Esophagus muscularis mucosa (tissue), 4 donors: ENCODE measurements at regions of chr5 and their contacts with region 1.

Region 1: DNA sequence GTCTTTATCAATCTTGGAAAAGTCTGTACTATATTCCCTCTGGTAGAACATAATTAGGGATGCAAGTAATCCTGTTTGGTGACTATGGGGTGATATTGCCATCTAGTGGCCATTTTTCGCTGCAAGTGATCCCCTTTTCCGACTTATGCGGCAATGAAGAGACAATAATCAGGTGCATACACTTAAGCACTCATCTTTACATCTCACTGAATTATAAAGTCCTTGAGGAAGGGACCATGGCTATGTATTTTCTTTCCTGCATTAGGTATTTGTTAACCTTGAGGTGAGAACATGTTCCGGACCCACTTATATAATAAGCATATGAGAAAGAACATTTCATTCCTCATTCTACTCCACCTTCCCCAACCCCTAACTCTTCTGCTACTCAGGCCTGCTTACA is 19.6 kb upstream of the LIX1 start:
- DNase-seq: no peak
- H3K4me3 ChIP-seq: no peak overlapping the region
- H3K27ac ChIP-seq: no peak overlapping the region
- H3K4me1 ChIP-seq: peaks cover 0 to 12% (median 0%) of the 10 kb centered on the region in 4 donors
- H3K27me3 ChIP-seq: no peaks in the 10 kb centered on the region
- CTCF ChIP-seq: peak; percentile 81 to 88 (median 82)
- EP300 ChIP-seq: no peak
- POLR2A ChIP-seq: no peak

Region 2: DNA sequence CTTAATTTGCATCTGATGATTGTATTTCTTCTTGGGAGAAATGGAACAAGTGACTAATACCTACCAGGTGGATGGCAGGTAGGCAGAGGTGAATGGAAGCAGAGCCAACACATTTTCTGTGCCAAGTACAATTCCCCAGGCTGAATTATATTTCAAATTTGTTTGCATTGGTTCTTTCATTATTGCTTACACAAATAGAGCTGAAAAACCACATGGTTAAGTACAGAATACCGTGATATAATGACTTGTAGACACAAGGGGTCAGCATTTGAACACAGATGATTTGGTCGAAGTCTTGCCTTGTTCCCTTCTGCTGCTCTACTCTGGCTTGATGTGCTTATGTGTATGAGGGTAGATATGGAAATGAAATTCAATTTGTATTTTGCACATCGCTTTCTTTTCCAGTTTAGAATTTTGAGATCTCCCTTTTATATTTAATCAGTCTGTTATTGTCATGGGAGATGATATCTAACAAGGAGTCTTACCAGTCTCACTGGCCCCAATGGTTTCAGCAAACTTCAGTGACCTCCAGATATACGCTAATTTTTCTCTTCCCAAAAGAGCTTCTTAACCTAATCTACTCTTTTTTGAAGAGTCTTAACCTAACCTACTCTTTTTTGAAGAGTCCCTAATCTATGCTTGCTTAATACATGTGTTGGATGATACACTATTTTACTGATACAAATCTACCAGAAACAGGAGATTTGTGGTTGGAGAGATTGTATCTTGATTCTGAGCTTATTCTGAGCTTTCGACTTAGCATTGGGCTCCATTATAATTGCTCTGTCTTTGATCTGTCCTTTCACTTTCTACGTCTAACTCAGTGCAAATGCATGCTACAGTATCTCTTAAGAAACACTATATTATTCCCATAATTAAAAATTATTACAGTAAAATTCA is 817.1 kb before region 1 on chr5:
- intact Hi-C with region 1: loop called (anchors 10 kb)
- DNase-seq: no peak
- H3K4me3 ChIP-seq: no peak overlapping the region
- H3K27ac ChIP-seq: no peak overlapping the region
- H3K4me1 ChIP-seq: peaks cover 0 to 5% (median 0%) of the 10 kb centered on the region in 4 donors
- H3K27me3 ChIP-seq: no peaks in the 10 kb centered on the region
- CTCF ChIP-seq: peak; percentile 49 to 71 (median 57)
- EP300 ChIP-seq: no peak
- POLR2A ChIP-seq: no peak

Region 3: GRCh38 chr5:96614110-96614691 is 547.8 kb before region 1 on chr5:
- intact Hi-C with region 1: loop called (anchors 10 kb)
- DNase-seq: peak; percentile 92
- H3K4me3 ChIP-seq: peak overlapping the region in 1 of 4 donors; percentile 2
- H3K27ac ChIP-seq: peak overlapping the region; percentile 14 to 60 (median 38)
- H3K4me1 ChIP-seq: peaks cover 0 to 17% (median 13%) of the 10 kb centered on the region in 4 donors
- H3K27me3 ChIP-seq: no peaks in the 10 kb centered on the region
- CTCF ChIP-seq: peak; percentile 53 to 60 (median 59)
- EP300 ChIP-seq: no peak
- POLR2A ChIP-seq: no peak

Region 4: DNA sequence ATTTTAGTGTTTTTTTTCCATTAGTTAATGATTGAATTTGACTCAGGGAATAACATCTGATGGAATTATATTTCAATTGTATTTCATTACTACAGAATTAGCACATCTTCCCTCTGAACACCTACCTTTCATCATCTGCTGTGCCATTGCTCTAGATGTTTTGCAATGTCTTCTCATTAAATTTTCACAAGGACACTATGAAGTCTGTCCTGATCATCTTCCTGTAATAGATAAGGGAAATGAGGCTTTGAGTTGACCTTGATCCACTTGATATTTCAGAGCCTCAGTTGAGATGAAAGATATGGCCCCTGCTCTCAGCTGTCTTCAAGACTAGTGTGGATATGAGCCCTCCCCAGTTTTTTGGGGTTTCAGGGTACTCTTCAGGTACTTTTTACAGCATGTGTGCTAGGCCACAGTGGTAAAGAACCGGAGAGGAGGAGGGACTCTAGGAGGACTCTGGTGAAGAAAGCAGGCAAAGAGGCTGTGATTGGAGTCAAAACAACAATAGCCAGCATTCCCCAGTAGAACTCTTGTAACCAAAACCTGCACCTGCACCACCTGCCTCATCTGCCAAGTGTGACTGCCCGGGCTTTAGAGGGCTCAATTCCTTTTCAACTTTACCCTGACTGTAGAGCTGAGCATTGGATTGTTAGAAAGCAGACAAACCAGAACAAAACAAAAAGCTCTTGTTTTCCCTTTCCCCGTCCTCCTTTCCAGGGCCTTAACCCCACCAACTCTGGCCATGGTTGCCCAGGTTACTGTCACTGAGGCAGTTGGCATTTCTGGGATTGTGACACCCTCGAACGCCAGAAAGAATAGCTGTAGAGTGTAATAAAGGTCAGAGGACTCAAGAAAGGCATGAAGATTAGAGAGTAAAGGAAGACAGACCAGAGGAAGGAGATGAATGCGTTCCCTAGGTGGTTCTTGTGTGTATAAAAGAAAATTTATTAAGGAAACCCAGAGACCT is 410.6 kb before region 1 on chr5:
- intact Hi-C with region 1: loop called (anchors 2 kb)
- DNase-seq: no peak
- H3K4me3 ChIP-seq: no peak overlapping the region
- H3K27ac ChIP-seq: peak overlapping the region in 3 of 4 donors; percentile 19 to 40 (median 30)
- H3K4me1 ChIP-seq: peaks cover 9 to 21% (median 15%) of the 10 kb centered on the region in 4 donors
- H3K27me3 ChIP-seq: no peaks in the 10 kb centered on the region
- CTCF ChIP-seq: no peak
- EP300 ChIP-seq: no peak
- POLR2A ChIP-seq: no peak

Region 5: DNA sequence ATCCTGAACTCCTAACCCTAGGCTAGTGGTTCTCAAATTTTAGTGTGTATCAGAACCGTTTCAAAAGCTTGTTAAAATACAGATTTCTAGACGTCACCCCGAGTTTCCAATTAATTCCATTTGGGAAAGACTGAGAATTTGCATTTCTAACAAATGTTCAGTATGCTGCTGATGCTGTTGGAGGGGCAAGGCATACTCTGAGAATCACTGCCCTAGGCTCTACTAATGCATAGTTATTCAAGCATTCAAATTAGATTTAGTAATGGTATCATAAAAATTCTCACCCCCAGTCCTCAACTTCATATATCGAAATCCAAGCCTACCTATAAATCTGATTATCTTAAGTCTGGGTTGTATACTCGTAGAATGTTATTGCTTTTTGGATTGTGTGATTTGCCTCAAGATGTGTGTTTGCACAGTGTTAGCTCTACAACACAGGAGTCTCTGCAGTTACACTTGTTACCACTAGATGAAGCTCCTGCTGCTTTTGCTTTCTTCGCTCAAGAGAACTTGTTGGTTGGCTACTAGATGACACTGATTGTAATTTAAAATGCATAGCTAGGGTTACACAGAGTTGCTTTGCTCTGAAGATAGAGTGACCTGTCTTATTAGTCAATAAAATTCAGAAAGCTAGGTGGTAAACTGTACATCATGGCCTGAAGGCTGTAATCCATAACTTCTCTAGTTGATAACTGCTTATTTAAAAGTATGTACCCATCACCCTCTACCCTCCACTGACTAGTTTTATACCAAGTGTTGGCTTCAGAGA is 293.3 kb before region 1 on chr5:
- intact Hi-C with region 1: loop called (anchors 2 kb)
- DNase-seq: peak; percentile 66
- H3K4me3 ChIP-seq: no peak overlapping the region
- H3K27ac ChIP-seq: no peak overlapping the region
- H3K4me1 ChIP-seq: no peaks in the 10 kb centered on the region
- H3K27me3 ChIP-seq: no peaks in the 10 kb centered on the region
- CTCF ChIP-seq: peak; percentile 75 to 96 (median 81)
- EP300 ChIP-seq: no peak
- POLR2A ChIP-seq: no peak

Region 6: DNA sequence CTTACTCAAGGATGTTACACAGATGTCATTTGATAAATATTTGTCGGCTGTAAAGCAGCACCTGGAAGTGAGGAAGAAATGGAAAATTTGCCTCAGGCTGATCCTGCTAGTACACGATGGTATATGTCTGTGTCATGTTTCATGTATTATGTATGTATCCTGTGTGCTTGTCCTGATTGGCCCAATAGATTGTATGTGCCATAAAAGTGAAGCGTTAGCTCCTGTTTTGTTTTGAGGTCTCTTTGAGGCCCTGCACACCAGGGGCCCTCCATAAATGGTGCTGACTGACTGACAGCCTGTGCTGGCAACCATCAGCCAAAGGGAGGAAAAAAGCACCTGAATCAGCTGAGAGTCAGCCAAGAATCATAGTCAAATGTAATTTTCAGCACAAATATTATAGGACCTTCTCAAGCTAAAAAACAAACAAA is 238.0 kb before region 1 on chr5:
- intact Hi-C with region 1: no loop called
- DNase-seq: no peak
- H3K4me3 ChIP-seq: no peak overlapping the region
- H3K27ac ChIP-seq: peak overlapping the region in 2 of 4 donors; percentile 14 to 46
- H3K4me1 ChIP-seq: peaks cover 0 to 22% (median 15%) of the 10 kb centered on the region in 4 donors
- H3K27me3 ChIP-seq: no peaks in the 10 kb centered on the region
- CTCF ChIP-seq: no peak
- EP300 ChIP-seq: no peak
- POLR2A ChIP-seq: no peak

Region 7: GRCh38 chr5:96934708-96935558 is 227.1 kb before region 1 on chr5:
- intact Hi-C with region 1: loop called (anchors 10 kb)
- DNase-seq: peak; percentile 97
- H3K4me3 ChIP-seq: peak overlapping the region; percentile 87 to 95 (median 92)
- H3K27ac ChIP-seq: peak overlapping the region; percentile 97 to 98 (median 98)
- H3K4me1 ChIP-seq: peaks cover 42 to 56% (median 55%) of the 10 kb centered on the region in 4 donors
- H3K27me3 ChIP-seq: no peaks in the 10 kb centered on the region
- CTCF ChIP-seq: peak in 1 of 3 experiments; percentile 14
- EP300 ChIP-seq: no peak
- POLR2A ChIP-seq: peak; percentile 55

Region 8: GRCh38 chr5:96997265-96997859 is 164.7 kb before region 1 on chr5:
- intact Hi-C with region 1: loop called (anchors 5 kb)
- DNase-seq: no peak
- H3K4me3 ChIP-seq: no peak overlapping the region
- H3K27ac ChIP-seq: no peak overlapping the region
- H3K4me1 ChIP-seq: no peaks in the 10 kb centered on the region
- H3K27me3 ChIP-seq: no peaks in the 10 kb centered on the region
- CTCF ChIP-seq: peak in 2 of 3 experiments; percentile 32 to 49
- EP300 ChIP-seq: no peak
- POLR2A ChIP-seq: no peak